Activated naive CD8-positive, alpha-beta T cell treated with anti-CD3 and anti-CD28 coated beads, Interleukin-2, amount 10 ng/mL, durations not matched to agents 7 days and 5 days (primary cell): ENCODE measurements at regions of chr2 and their contacts with region 1.

Region 1: GRCh38 chr2:234288974-234289455 is 207.9 kb downstream of the ARL4C start:
- DNase-seq: peak; percentile 75
- ATAC-seq: no peak
- H3K4me3 Mint-ChIP-seq: peak overlapping the region; percentile 74
- H3K27ac Mint-ChIP-seq: peak overlapping the region; percentile 97
- H3K4me1 Mint-ChIP-seq: peaks cover 70% of the 10 kb centered on the region
- H3K27me3 Mint-ChIP-seq: no peaks in the 10 kb centered on the region

Region 2: DNA sequence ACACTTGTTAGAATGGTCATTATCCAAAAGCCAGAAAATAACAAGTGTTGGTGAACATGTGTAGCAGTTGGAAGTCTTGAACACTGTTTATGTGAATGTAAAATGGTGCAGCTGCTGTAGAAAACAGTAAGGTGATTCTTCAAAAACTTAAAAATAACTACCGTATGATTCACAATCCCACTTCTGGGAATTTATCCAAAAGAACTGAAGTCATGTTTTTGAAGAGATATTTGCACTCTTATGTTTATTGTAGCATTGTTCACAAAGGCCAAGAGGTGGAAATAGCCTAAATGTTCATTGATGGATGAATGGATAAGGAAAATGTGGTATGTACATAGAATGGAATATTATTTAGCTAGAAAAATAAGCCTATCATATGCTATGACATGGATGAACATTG is 244.9 kb before region 1 on chr2:
- POLR2A ChIA-PET with region 1: no interaction called
- DNase-seq: no peak
- ATAC-seq: no peak
- H3K4me3 Mint-ChIP-seq: no peak overlapping the region
- H3K27ac Mint-ChIP-seq: no peak overlapping the region
- H3K4me1 Mint-ChIP-seq: no peaks in the 10 kb centered on the region
- H3K27me3 Mint-ChIP-seq: peaks cover 45% of the 10 kb centered on the region

Region 3: DNA sequence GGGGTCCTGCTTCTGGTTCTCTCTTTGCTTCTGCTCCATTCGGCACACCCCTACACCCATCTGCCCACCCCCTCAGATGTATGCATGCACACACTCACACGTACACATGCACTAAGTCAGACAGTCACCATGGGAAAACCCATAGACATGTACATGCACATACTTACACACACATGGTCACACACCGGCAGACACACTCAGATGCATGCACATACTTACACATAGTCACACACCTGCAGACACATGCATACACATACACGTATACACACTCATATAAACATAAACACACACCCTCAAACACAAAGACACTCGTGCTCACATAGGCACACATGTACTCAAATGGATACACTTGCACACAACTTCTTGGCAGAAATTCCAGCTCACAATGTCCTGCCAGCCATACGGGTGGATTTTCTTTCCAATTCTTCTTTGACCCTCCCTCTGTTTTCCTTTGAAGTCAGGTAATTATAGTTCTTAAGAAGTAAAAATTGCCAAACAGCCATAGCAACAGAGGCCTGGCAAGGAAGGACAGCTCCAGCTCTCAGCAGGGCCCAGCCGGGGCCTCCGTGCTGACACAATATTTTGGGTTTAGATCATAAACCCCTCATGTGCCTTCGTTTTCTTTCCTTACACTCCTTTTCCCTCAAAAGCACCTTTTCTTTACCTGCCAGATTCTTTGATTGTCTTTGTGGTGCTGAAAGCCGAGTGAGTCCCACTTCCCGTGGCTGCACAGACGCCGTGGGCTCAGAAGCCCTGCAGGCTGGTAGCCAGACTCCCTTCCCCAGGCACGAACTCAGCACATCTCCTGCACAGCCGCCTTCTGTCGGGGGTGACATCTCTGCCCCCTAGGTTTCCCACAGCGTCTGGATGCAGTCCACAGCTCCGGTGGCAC is 12.2 kb after region 1 on chr2:
- POLR2A ChIA-PET with region 1: interaction called, 13 read pairs
- DNase-seq: no peak
- ATAC-seq: peak; percentile 49
- H3K4me3 Mint-ChIP-seq: peak overlapping the region; percentile 34
- H3K27ac Mint-ChIP-seq: peak overlapping the region; percentile 68
- H3K4me1 Mint-ChIP-seq: peaks cover 66% of the 10 kb centered on the region
- H3K27me3 Mint-ChIP-seq: no peaks in the 10 kb centered on the region

Region 4: GRCh38 chr2:234374736-234375135 is 85.7 kb after region 1 on chr2:
- POLR2A ChIA-PET with region 1: interaction called, 34 read pairs
- DNase-seq: no peak
- ATAC-seq: no peak
- H3K4me3 Mint-ChIP-seq: no peak overlapping the region
- H3K27ac Mint-ChIP-seq: no peak overlapping the region
- H3K4me1 Mint-ChIP-seq: peaks cover 40% of the 10 kb centered on the region
- H3K27me3 Mint-ChIP-seq: no peaks in the 10 kb centered on the region

Region 5: DNA sequence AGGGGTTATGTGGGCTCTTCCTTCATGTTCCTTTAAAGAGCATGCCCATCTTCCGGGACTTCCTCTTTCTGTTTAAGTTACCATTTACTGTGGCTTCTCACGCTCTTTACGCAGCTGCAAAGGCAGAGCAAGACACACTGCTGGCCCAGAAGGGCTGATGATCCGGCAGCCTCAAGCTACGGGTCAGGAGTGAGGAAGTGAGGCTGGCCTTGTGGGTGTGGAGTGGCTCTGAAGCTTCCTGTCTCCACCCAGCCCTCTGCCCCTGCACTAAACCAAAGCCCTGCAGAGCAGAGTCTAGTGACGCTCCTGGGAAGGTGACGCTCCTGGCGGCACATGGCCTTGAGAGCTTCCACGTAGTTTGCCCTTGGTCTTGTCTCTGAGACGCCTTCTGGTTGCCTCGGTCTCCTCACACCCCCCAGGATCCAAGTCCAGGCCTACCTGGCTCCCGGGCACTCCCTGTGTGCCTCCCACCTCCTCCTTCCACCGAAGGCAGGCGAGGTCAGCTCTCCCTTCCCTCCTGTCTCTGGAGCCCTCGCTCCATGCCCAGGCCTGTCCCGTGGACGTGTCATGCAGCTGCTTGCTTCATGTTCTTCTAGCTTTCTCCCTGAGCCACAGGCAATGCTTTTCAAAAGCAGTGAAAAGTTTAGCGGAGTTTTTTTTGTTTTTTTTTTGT is 157.5 kb after region 1 on chr2:
- POLR2A ChIA-PET with region 1: interaction called, 165 read pairs
- DNase-seq: peak; percentile 82
- ATAC-seq: peak; percentile 95
- H3K4me3 Mint-ChIP-seq: peak overlapping the region; percentile 69
- H3K27ac Mint-ChIP-seq: peak overlapping the region; percentile 98
- H3K4me1 Mint-ChIP-seq: peaks cover 69% of the 10 kb centered on the region
- H3K27me3 Mint-ChIP-seq: no peaks in the 10 kb centered on the region

Region 6: DNA sequence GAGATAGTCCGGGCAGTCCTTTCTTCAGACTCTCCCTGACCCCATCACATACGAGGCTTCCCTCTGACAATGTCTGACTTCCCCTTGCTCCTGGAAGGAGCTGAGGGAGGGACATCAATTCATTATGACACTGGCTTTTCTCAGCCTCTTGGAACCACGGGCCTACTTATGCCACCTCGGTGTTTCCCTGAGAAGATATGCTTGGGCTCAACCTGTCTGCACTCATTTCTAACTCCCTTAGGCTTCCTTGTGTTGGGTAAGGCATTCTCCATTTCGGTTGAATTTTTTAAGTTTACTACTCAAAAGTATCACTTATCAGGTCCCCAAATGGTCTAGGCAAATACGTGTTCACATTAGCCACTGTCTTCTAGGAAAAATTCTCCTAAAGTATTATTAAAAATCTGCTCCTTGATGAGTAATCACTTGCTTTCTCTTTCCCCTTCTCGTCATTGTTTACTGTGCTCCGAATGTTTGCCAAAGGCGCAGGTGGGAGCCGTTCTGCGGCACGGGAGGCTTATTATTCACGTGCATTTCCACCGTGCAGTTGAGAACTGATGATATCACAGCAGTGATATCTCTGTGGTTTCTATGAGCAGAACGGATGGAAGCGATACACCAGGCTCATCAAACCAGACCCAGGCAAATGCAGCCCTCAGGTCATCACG is 174.7 kb after region 1 on chr2:
- POLR2A ChIA-PET with region 1: interaction called, 17 read pairs
- DNase-seq: peak; percentile 49
- ATAC-seq: peak; percentile 74
- H3K4me3 Mint-ChIP-seq: peak overlapping the region; percentile 86
- H3K27ac Mint-ChIP-seq: peak overlapping the region; percentile 90
- H3K4me1 Mint-ChIP-seq: peaks cover 42% of the 10 kb centered on the region
- H3K27me3 Mint-ChIP-seq: peaks cover 3% of the 10 kb centered on the region

Region 7: GRCh38 chr2:234488913-234489451 is 200.0 kb after region 1 on chr2:
- POLR2A ChIA-PET with region 1: interaction called, 273 read pairs
- DNase-seq: peak; percentile 68
- ATAC-seq: peak; percentile 76
- H3K4me3 Mint-ChIP-seq: peak overlapping the region; percentile 97
- H3K27ac Mint-ChIP-seq: peak overlapping the region; percentile 99
- H3K4me1 Mint-ChIP-seq: peaks cover 71% of the 10 kb centered on the region
- H3K27me3 Mint-ChIP-seq: no peaks in the 10 kb centered on the region